ENCODE measurements at regions of chr17 and their contacts with region 1.

Region 1: DNA sequence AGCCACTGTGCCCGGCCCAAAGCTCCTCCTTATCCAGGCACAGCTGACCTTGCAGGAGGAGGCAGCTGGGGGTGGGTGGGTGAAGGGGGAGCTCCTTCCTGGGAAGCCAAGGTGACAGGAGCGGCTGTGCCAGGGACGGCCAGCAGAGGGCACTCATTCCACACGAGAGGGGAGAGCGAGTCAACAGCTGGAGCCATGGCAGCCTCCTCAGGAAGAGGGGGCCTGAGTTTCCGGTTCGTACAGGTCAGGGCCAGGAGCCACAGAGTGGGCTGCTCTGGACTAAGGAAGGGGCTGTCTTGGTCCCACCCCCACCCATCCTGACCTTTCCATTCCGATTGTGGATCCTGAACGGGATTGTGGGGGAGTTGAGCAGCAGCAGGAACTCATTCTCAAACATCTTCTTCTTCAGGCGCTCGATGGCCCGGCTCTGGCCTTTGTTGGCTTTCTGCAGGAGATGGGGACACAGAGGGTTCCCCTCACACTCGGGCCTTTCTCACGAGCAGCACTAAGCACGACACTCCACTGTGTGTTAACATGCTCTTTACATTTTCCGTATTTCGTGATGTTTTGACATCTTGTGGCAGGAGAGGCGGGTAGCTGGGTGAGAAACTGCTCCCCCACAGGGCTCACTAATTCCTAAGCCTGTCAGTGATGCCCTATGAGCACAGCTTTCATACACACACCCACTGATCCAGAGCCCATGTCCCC is 61.6 kb downstream of the TIMM22 start:
- DNase-seq: peak; percentile 43 to 83
- H3K4me3 ChIP-seq: no peak overlapping the region
- H3K27ac ChIP-seq: no peak overlapping the region
- H3K4me1 ChIP-seq: peaks cover 11% of the 10 kb centered on the region
- H3K27me3 ChIP-seq: no peaks in the 10 kb centered on the region
- CTCF ChIP-seq: peak; percentile 78

Region 2: DNA sequence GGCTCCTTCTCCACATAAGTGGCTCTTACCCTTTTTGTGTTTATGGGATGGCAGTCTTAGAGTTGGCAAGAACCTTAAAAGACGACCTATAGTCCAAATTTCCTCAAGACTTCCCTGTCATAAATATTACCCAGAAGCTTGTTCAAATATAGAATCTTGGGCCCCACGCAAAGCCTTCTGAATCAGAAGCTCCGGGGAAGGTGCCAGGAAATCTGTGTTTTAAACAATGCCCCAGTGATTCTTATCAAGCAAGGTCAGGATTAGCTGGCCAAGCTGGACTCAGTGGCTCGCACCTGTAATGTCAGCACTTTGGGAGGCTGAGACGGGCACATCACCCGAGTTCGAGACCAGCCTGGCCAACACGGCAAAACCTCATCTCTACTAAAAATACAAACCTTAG is 24.0 kb after region 1 on chr17:
- CTCF ChIA-PET with region 1: no interaction called
- POLR2A ChIA-PET with region 1: no interaction called
- intact Hi-C with region 1: loop called (anchors 1 kb)
- DNase-seq: peak; percentile 58 to 78
- H3K4me3 ChIP-seq: no peak overlapping the region
- H3K27ac ChIP-seq: peak overlapping the region; percentile 45
- H3K4me1 ChIP-seq: peaks cover 61% of the 10 kb centered on the region
- H3K27me3 ChIP-seq: no peaks in the 10 kb centered on the region
- CTCF ChIP-seq: no peak

Region 3: DNA sequence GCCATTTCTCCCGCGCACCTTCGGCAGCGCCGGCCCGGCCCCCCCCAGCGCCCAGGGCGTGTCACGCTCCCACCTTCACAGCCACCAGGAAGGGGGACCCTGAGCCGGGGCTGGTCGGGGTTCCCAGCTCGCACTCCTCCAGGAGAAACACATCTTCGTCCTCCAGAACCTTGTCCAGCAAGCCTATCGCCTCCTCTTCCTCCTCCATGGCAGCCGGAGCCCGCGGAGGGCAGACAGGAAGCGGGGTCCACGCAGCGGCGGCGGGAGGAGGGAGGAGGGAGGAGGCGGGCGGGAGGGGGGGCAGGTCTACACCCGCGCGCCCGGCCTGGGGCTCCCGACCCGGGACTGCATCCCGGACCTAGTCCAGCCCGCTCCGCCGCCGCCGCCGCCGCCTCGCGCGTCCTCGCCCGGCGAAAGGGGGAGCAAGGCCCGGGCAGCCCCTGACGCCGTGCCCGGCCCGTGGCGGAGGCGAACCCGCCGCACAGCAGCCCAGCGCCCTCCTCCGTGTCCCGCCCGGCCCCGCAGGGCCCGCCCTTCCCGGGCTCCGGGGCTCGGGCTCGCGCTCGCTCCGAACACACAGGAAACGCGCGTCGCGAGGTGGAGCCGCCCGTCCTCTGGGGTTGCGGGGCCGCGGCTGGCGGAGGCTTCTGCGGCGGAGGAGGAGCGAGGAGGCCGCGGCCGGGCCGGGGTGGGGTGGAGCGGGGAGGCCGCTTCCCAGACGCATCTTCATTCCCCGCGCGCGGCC is 50.5 kb after region 1 on chr17:
- CTCF ChIA-PET with region 1: interaction called, 3 read pairs
- POLR2A ChIA-PET with region 1: no interaction called
- intact Hi-C with region 1: loop called (anchors 1 kb)
- DNase-seq: peak in 1 of 2 experiments; percentile 49
- H3K4me3 ChIP-seq: peak overlapping the region; percentile 89
- H3K27ac ChIP-seq: peak overlapping the region; percentile 97
- H3K4me1 ChIP-seq: peaks cover 46% of the 10 kb centered on the region
- H3K27me3 ChIP-seq: no peaks in the 10 kb centered on the region
- CTCF ChIP-seq: no peak

Region 4: GRCh38 chr17:1122533-1123392 is 64.2 kb after region 1 on chr17:
- CTCF ChIA-PET with region 1: interaction called, 17 read pairs
- POLR2A ChIA-PET with region 1: no interaction called
- intact Hi-C with region 1: loop called (anchors 2 kb)
- DNase-seq: peak; percentile 46 to 87
- H3K4me3 ChIP-seq: no peak overlapping the region
- H3K27ac ChIP-seq: no peak overlapping the region
- H3K4me1 ChIP-seq: 0 out of 2 replicates have a peak, but pooled peaks cover 10% of the 10 kb centered on the region
- H3K27me3 ChIP-seq: no peaks in the 10 kb centered on the region
- CTCF ChIP-seq: peak; percentile 96

Region 5: GRCh38 chr17:1147661-1148060 is 89.1 kb after region 1 on chr17:
- CTCF ChIA-PET with region 1: interaction called, 36 read pairs
- POLR2A ChIA-PET with region 1: no interaction called
- intact Hi-C with region 1: loop called (anchors 1 kb)
- DNase-seq: peak; percentile 69 to 80
- H3K4me3 ChIP-seq: no peak overlapping the region
- H3K27ac ChIP-seq: no peak overlapping the region
- H3K4me1 ChIP-seq: no peaks in the 10 kb centered on the region
- H3K27me3 ChIP-seq: no peaks in the 10 kb centered on the region
- CTCF ChIP-seq: peak; percentile 79

Region 6: DNA sequence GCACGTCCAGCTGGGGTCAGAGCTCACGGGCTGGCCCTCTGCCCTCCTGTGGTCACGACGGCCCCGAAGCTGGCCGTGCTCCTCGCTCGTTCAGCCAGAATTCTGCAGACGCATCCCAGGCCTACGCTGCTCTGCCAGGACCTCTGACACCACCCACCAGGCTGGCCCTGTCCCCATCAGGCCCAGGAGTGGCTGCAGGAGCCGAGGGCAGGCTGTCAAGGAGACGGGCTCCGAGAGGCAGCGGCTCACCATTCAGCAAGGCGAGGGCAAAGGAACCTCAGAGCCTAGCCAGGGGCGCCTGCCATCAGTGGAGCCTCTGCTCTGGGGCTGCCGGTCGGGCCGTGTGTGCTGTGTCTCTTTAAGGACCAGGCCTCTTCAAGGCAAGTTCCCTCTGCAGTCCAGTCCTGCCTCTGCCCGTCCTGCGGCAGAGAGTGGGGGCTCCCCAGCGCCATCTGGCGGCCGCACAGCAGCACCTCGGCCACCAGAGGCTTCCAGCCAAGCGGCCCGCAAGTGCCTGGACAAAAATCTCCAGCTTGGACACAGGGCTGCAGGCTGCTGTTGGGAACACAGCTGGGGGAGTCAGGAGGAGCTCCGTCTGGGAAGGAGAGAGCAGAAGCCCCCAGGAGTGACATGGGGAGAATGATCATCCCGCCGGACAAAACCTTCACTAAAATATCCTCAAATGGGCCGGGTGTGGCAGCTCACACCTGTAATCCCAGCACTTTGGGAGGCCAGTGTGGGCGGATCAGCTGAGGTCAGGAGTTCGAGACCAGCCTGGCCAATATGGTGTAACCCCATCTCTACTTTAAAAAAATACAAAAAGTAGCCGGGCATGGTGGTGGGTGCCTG is 128.6 kb after region 1 on chr17:
- CTCF ChIA-PET with region 1: interaction called, 12 read pairs
- POLR2A ChIA-PET with region 1: no interaction called
- intact Hi-C with region 1: loop called (anchors 1 kb)
- DNase-seq: peak; percentile 63 to 87
- H3K4me3 ChIP-seq: no peak overlapping the region
- H3K27ac ChIP-seq: no peak overlapping the region
- H3K4me1 ChIP-seq: no peaks in the 10 kb centered on the region
- H3K27me3 ChIP-seq: peaks cover 14% of the 10 kb centered on the region; the same call in 1 of the 2 replicates
- CTCF ChIP-seq: peak; percentile 98

Region 7: DNA sequence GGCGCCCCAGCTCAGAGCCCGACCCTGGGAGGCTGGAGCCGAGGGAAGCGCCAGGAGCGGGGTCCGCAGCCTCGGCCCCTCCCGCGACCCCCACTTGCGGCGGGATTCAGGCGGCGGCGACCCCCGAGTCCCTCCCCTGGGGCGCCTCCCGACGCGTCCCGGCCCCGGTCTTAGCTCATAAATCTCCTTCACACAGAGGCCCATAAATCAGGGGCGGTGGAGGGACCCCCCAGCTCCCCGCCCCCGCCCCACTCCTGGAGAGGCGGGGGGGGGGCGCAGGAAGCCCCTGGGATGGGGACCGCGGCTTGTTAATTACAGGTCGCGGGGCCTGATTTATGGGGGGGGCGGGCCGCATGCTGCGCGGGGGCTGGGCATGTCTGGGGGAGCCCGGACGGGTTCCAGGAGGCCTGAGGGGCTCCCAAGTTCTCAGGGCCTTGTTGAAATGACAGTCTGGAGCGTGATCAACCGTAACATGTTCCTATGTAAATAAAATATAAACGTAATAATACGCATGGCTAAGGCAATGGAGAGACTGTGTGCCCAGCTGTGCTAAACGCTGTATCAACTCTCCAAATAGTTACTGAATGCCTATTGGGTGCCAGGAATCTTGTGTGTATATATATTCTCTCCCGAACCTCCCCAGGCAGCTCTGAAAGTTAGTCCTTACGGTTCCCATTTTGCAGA is 201.7 kb after region 1 on chr17:
- CTCF ChIA-PET with region 1: no interaction called
- POLR2A ChIA-PET with region 1: no interaction called
- intact Hi-C with region 1: loop called (anchors 2 kb)
- DNase-seq: no peak
- H3K4me3 ChIP-seq: peak overlapping the region; percentile 58; the same call in 1 of the 2 replicates
- H3K27ac ChIP-seq: no peak overlapping the region
- H3K4me1 ChIP-seq: peaks cover 10% of the 10 kb centered on the region; the same call in 1 of the 2 replicates
- H3K27me3 ChIP-seq: peaks cover 5% of the 10 kb centered on the region; the same call in 1 of the 2 replicates
- CTCF ChIP-seq: no peak

Measured in PC-9 (cell line).